SK-N-SH (cell line): ENCODE measurements at regions of chr3 and their contacts with region 1.

Region 1: DNA sequence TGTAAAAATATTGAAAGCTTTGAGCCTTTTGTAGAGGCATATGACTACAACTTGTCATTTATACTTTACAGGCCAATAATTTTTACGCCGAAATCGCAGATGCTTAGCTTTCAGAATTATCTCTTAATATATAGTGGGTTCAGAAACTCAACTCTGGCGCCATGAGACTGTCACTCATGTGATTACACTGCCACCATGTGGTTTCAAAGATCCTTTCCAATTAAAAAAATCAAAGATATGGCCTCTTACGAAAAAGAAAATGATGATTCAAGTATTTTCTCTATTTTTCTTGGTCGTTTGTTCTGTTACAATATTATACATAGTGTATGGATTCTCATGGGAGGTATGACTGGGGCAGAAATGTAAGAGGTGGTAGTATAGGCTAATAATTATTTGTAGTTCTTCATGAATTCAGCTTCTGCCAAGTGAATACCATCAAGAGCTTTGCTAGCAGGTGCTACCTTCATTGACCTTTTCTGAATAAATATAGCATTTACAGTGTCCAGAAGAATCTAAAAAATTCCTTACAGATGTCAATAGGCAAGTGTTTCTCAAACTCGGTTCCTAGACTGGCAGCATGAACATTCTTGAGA is 751.7 kb upstream of the GOLIM4 start:
- DNase-seq: peak; percentile 25
- H3K4me3 ChIP-seq: no peak overlapping the region
- H3K27ac ChIP-seq: no peak overlapping the region
- H3K4me1 ChIP-seq: no peaks in the 10 kb centered on the region
- H3K27me3 ChIP-seq: peaks cover 11% of the 10 kb centered on the region; the same call in 1 of the 2 replicates
- CTCF ChIP-seq: peak; percentile 74
- EP300 ChIP-seq: no peak
- RAD21 ChIP-seq: peak; percentile 91

Region 2: DNA sequence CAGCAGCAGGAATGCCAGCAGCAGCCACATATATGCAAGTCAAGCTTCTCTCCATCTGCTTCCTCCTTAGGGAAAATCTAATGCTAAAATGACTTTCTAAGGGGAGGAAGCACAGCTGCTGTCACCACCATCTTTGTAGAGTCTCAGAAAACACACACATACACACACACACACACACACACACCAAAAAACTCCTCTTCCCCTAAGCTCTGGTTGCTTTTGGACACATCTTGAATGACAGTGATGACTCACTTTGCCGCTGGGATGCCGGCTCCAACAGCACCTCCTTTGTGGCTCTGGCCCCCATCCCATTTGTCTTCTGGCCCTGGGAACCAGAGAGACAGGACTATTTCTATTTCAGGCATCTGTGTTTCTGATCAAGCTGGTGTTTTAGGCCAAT is 626.8 kb before region 1 on chr3:
- CTCF ChIA-PET with region 1: interaction called, 43 read pairs
- POLR2A ChIA-PET with region 1: no interaction called
- DNase-seq: no peak
- H3K4me3 ChIP-seq: no peak overlapping the region
- H3K27ac ChIP-seq: no peak overlapping the region
- H3K4me1 ChIP-seq: peaks cover 0 to 2% of the 10 kb centered on the region in 2 experiments; a peak in 1 of 4 replicates
- H3K27me3 ChIP-seq: no peaks in the 10 kb centered on the region
- CTCF ChIP-seq: no peak
- EP300 ChIP-seq: no peak
- RAD21 ChIP-seq: no peak

Region 3: DNA sequence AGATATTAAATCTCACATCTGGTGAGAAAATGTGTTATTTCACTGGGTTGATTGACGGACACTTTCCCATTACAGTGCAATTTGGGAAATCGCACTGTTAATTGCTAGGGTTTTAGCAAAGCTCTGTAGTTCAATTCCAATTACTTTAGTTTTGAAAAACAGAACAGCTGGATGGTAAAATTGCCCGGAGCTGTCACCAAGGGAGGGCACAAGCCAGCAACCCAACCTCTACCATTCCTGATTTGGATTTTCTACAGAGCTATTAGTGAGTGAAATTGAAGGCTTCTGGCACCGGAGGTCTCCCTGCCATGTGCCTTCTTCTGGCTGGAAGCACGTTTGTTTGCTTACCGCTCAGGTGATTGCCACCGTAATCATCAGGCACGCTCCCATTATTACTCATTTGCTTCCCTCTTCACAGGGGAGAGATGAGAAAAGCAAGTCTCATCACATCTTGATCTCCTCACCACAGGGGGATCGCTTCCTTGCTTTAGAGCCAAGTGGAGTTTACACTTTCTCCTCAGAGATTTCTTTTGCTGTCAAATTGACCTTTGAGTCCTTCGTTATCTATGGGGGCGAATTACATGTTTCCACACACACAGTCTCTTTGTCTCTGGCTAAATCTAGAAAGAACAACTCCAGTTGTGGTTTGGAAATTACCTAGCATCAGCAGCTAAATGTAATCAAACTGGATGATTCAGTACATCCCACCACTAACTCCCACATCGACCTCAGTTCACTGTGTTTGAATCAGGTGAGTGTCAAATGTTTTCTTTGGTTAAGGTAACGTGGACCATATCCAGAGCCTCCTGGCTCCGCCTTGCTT is 329.9 kb before region 1 on chr3:
- CTCF ChIA-PET with region 1: interaction called, 17 read pairs
- POLR2A ChIA-PET with region 1: no interaction called
- DNase-seq: no peak
- H3K4me3 ChIP-seq: no peak overlapping the region
- H3K27ac ChIP-seq: no peak overlapping the region
- H3K4me1 ChIP-seq: peaks cover 0 to 3% of the 10 kb centered on the region in 2 experiments; a peak in 1 of 4 replicates
- H3K27me3 ChIP-seq: no peaks in the 10 kb centered on the region
- CTCF ChIP-seq: no peak
- EP300 ChIP-seq: no peak
- RAD21 ChIP-seq: peak; percentile 18; the same call in 1 of the 2 replicates

Region 4: GRCh38 chr3:168562419-168562818 is 285.0 kb before region 1 on chr3:
- CTCF ChIA-PET with region 1: no interaction called
- POLR2A ChIA-PET with region 1: no interaction called
- DNase-seq: no peak
- H3K4me3 ChIP-seq: no peak overlapping the region
- H3K27ac ChIP-seq: no peak overlapping the region
- H3K4me1 ChIP-seq: no peaks in the 10 kb centered on the region
- H3K27me3 ChIP-seq: no peaks in the 10 kb centered on the region
- CTCF ChIP-seq: no peak
- EP300 ChIP-seq: no peak
- RAD21 ChIP-seq: no peak

Region 5: DNA sequence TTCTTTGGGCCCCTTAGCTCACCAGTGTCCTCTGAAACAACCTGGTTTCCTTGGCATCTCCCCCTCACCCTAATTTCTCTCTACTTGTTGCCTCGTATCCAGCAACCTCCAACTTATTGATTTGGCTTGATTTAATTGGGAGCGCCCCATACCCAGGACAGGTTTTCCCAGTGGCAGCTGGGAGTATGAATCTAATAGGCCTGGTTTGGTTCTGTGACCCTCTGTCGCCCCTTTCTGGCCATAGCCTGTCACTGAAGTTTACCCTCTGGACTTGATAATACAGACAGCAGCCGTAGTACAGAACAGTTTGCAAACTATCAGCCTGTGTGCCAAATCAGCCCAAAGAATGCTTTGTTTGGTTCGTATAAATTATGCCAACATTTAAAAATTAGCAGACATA is 226.6 kb before region 1 on chr3:
- CTCF ChIA-PET with region 1: interaction called, 47 read pairs
- POLR2A ChIA-PET with region 1: no interaction called
- DNase-seq: peak; percentile 36
- H3K4me3 ChIP-seq: peak overlapping the region in 1 of 2 experiments; percentile 54; a peak in 1 of 4 replicates
- H3K27ac ChIP-seq: no peak overlapping the region
- H3K4me1 ChIP-seq: no peaks in the 10 kb centered on the region; a peak in 1 of 4 replicates
- H3K27me3 ChIP-seq: no peaks in the 10 kb centered on the region
- CTCF ChIP-seq: peak; percentile 50
- EP300 ChIP-seq: no peak
- RAD21 ChIP-seq: peak; percentile 85

Region 6: DNA sequence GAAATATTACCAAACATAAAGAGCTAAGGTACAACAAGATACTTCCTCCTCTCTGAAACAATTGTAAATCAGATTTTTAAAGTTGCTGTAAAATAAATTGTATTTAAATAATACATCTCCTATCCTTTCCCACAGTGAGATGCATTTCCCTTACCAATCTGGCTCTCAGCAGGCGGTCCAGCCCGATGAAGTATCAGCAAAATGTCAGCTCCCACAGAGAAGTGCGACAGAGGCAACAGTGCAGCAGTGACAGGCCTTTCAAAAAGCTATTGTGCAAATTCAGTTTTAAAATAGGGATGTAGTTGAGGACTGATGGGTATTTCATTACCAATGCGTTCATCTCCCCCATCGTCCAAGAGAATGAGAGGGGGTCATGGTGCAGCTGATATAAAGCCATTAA is 18.4 kb before region 1 on chr3:
- CTCF ChIA-PET with region 1: interaction called, 25 read pairs
- POLR2A ChIA-PET with region 1: no interaction called
- DNase-seq: no peak
- H3K4me3 ChIP-seq: no peak overlapping the region
- H3K27ac ChIP-seq: no peak overlapping the region
- H3K4me1 ChIP-seq: no peaks in the 10 kb centered on the region
- H3K27me3 ChIP-seq: no peaks in the 10 kb centered on the region
- CTCF ChIP-seq: no peak
- EP300 ChIP-seq: no peak
- RAD21 ChIP-seq: no peak

Region 7: DNA sequence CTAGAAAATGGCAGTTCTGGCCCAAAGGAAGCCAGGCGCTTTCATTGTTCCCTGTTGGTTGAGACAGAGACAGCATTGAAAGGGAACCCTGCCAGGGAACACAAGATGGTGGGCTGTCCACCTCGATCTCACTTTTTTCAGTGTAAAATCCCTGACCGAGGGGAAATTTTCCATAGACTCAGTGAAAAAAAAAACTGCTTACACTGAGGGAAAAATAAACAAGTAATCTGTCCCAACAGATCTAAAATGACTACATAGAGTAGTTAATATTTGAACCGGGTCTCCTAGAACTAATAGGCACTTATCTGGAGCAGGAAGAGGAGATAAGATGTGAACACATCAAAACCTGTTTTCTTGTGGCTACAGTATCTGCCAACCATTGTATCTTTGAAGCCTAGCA is 11.8 kb after region 1 on chr3:
- CTCF ChIA-PET with region 1: interaction called, 34 read pairs
- POLR2A ChIA-PET with region 1: no interaction called
- DNase-seq: no peak
- H3K4me3 ChIP-seq: no peak overlapping the region
- H3K27ac ChIP-seq: no peak overlapping the region
- H3K4me1 ChIP-seq: no peaks in the 10 kb centered on the region; a peak in 1 of 4 replicates
- H3K27me3 ChIP-seq: no peaks in the 10 kb centered on the region
- CTCF ChIP-seq: no peak
- EP300 ChIP-seq: no peak
- RAD21 ChIP-seq: no peak

Region 8: DNA sequence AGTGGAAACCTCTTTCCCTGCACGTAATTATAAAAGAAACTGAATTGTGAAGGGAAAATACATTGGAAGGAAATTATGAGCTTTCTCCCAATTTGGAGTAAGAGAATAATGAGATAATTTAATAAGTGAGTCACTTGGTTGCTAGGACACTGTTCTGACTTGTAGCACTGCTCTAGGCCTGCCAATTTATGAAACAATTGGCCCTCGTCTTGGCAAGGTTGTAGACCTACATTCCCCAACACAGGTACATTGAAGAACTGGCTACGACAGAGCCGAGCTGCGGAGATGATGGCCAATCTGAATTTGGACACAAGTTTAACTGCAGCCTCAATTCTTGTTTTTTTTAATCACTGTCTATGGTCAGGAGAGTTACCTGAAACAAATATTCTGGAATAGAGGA is 142.0 kb after region 1 on chr3:
- CTCF ChIA-PET with region 1: no interaction called
- POLR2A ChIA-PET with region 1: no interaction called
- DNase-seq: no peak
- H3K4me3 ChIP-seq: no peak overlapping the region
- H3K27ac ChIP-seq: no peak overlapping the region
- H3K4me1 ChIP-seq: no peaks in the 10 kb centered on the region
- H3K27me3 ChIP-seq: no peaks in the 10 kb centered on the region
- CTCF ChIP-seq: no peak
- EP300 ChIP-seq: no peak
- RAD21 ChIP-seq: no peak

Region 9: GRCh38 chr3:169710619-169711018 is 863.2 kb after region 1 on chr3:
- CTCF ChIA-PET with region 1: no interaction called
- POLR2A ChIA-PET with region 1: no interaction called
- DNase-seq: no peak
- H3K4me3 ChIP-seq: no peak overlapping the region
- H3K27ac ChIP-seq: no peak overlapping the region
- H3K4me1 ChIP-seq: no peaks in the 10 kb centered on the region
- H3K27me3 ChIP-seq: no peaks in the 10 kb centered on the region
- CTCF ChIP-seq: no peak
- EP300 ChIP-seq: no peak
- RAD21 ChIP-seq: no peak